B cell (primary cell): ENCODE measurements at regions of chrX and their contacts with region 1.

Region 1: DNA sequence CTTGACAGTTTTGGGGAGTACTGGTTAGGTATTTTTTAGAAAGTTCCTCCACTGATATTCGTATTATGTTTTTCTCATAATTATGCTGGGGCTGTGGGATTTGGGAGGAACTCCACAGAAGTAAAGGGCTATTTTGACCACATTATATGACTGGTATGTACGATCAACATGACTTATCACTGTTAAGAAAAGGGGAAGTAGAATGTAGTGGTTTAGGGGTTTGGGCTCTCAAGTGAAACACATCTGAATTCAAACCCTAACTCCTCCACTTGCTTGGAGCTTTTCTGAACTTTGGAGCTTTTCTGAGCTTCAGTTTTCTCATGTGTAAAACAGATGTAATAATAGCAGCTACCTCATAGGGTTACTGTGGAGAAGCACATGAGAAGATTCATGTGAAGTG is 96.4 kb upstream of the C1GALT1C1 start:
- DNase-seq: peak; percentile 71
- ATAC-seq: peak; percentile 95
- H3K4me3 ChIP-seq: no peak overlapping the region
- H3K4me3 Mint-ChIP-seq: peak overlapping the region; percentile 46
- H3K27ac ChIP-seq: peak overlapping the region; percentile 43 to 55
- H3K27ac Mint-ChIP-seq: peak overlapping the region; percentile 59
- H3K4me1 ChIP-seq: peaks cover 22 to 23% of the 10 kb centered on the region in 2 donors
- H3K4me1 Mint-ChIP-seq: peaks cover 27% of the 10 kb centered on the region
- H3K27me3 ChIP-seq: no peaks in the 10 kb centered on the region
- H3K27me3 Mint-ChIP-seq: no peaks in the 10 kb centered on the region
- CTCF ChIP-seq: no peak

Region 2: DNA sequence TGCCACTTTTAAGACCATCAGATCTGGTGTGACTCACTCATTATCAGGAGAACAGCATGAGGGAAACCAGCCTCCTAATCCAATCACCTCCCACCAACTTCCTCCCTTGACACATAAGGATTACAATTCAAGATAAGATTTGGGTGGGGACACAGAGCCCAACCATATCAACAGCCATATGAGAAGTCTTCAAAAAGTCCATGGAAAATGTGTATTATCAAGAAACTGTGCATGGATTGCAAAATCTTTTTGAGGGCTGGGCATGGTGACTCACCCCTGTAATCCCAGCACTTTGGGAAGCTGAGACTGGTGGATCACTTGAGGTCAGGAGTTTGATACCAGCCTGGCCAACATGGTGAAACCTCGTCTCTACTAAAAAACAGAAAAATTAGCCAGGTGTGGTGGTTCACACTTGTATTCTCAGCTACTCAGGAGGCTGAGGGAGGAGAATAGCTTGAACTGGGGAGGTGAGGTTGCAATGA is 917.1 kb before region 1 on chrX:
- CTCF ChIA-PET with region 1: no interaction called
- POLR2A ChIA-PET with region 1: no interaction called
- intact Hi-C with region 1: no loop called
- DNase-seq: no peak
- ATAC-seq: no peak
- H3K4me3 ChIP-seq: no peak overlapping the region
- H3K4me3 Mint-ChIP-seq: no peak overlapping the region
- H3K27ac ChIP-seq: no peak overlapping the region
- H3K27ac Mint-ChIP-seq: no peak overlapping the region
- H3K4me1 ChIP-seq: no peaks in the 10 kb centered on the region
- H3K4me1 Mint-ChIP-seq: no peaks in the 10 kb centered on the region
- H3K27me3 ChIP-seq: no peaks in the 10 kb centered on the region
- H3K27me3 Mint-ChIP-seq: no peaks in the 10 kb centered on the region
- CTCF ChIP-seq: no peak

Region 3: DNA sequence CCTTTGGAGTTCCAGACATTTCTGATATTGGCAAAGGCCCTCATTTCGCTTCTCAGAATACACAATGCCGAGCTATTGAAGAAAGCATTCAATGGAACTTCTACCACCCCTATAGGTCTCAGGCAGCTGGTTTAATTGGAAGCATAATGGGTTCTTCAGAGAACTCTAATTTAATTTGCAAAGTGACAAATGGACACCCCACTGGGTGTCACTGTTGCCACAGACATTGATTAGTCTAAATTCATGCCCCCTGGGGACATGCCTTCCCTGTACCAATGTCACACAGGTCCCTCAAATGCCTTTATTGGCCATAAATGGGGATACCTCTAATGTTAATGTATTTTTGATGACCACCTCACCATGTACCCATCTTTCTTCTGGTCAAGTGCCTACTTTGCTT is 392.1 kb before region 1 on chrX:
- CTCF ChIA-PET with region 1: no interaction called
- POLR2A ChIA-PET with region 1: no interaction called
- intact Hi-C with region 1: no loop called
- DNase-seq: no peak
- ATAC-seq: no peak
- H3K4me3 ChIP-seq: no peak overlapping the region
- H3K4me3 Mint-ChIP-seq: no peak overlapping the region
- H3K27ac ChIP-seq: no peak overlapping the region
- H3K27ac Mint-ChIP-seq: no peak overlapping the region
- H3K4me1 ChIP-seq: no peaks in the 10 kb centered on the region
- H3K4me1 Mint-ChIP-seq: no peaks in the 10 kb centered on the region
- H3K27me3 ChIP-seq: no peaks in the 10 kb centered on the region
- H3K27me3 Mint-ChIP-seq: peaks cover 14% of the 10 kb centered on the region
- CTCF ChIP-seq: no peak

Region 4: GRCh38 chrX:120749141-120749846 is 23.0 kb after region 1 on chrX:
- CTCF ChIA-PET with region 1: interaction called, 10 read pairs
- POLR2A ChIA-PET with region 1: interaction called, 5 read pairs
- intact Hi-C with region 1: loop called (anchors 1 kb)
- DNase-seq: peak; percentile 69
- ATAC-seq: peak; percentile 72
- H3K4me3 ChIP-seq: peak overlapping the region in 2 of 5 experiments; percentile 8 to 21
- H3K4me3 Mint-ChIP-seq: peak overlapping the region; percentile 74
- H3K27ac ChIP-seq: peak overlapping the region; percentile 79 to 80
- H3K27ac Mint-ChIP-seq: peak overlapping the region; percentile 90
- H3K4me1 ChIP-seq: peaks cover 64 to 78% of the 10 kb centered on the region in 2 donors
- H3K4me1 Mint-ChIP-seq: peaks cover 83% of the 10 kb centered on the region
- H3K27me3 ChIP-seq: no peaks in the 10 kb centered on the region
- H3K27me3 Mint-ChIP-seq: no peaks in the 10 kb centered on the region
- CTCF ChIP-seq: no peak

Region 5: GRCh38 chrX:121128925-121129877 is 402.9 kb after region 1 on chrX:
- CTCF ChIA-PET with region 1: no interaction called
- POLR2A ChIA-PET with region 1: no interaction called
- intact Hi-C with region 1: no loop called
- DNase-seq: no peak
- ATAC-seq: no peak
- H3K4me3 ChIP-seq: no peak overlapping the region
- H3K4me3 Mint-ChIP-seq: no peak overlapping the region
- H3K27ac ChIP-seq: no peak overlapping the region
- H3K27ac Mint-ChIP-seq: no peak overlapping the region
- H3K4me1 ChIP-seq: no peaks in the 10 kb centered on the region
- H3K4me1 Mint-ChIP-seq: no peaks in the 10 kb centered on the region
- H3K27me3 ChIP-seq: no peaks in the 10 kb centered on the region
- H3K27me3 Mint-ChIP-seq: no peaks in the 10 kb centered on the region
- CTCF ChIP-seq: no peak